ENCODE measurements at regions of chr3 and their contacts with region 1.

Region 1: GRCh38 chr3:15268033-15268631 is 62.1 kb downstream of the CAPN7 start:
- DNase-seq: peak; percentile 59
- ATAC-seq: peak; percentile 87
- H3K4me3 ChIP-seq: no peak overlapping the region
- H3K27ac ChIP-seq: no peak overlapping the region
- H3K4me1 ChIP-seq: no peaks in the 10 kb centered on the region
- H3K27me3 ChIP-seq: no peaks in the 10 kb centered on the region; a peak in 1 of 5 replicates
- CTCF ChIP-seq: peak; percentile 94
- EP300 ChIP-seq: no peak
- POLR2A ChIP-seq: no peak
- RAD21 ChIP-seq: peak; percentile 75

Region 2: DNA sequence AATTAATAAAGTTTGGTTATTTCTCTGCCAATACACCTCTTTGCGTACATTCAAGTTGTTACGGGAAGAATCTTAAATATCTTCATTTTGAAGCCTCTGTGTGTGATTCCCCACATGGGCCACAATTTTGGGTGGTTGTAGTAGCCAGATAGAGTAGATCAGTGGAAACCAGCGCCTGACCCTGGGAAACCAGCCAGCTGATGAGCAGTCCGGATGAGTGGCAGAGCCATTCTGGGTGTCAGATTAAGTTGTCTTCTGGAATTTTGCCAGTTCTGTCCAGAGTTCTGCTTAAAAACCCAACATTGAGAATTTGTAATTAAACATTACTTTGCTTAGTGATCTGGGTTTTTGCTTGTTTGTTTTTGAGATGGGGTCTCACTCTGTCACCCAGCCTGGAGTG is 252.7 kb before region 1 on chr3:
- CTCF ChIA-PET with region 1: no interaction called
- POLR2A ChIA-PET with region 1: no interaction called
- in situ Hi-C with region 1: no loop called
- intact Hi-C with region 1: no loop called
- DNase-seq: no peak
- ATAC-seq: no peak
- H3K4me3 ChIP-seq: no peak overlapping the region
- H3K27ac ChIP-seq: no peak overlapping the region
- H3K4me1 ChIP-seq: no peaks in the 10 kb centered on the region
- H3K27me3 ChIP-seq: no peaks in the 10 kb centered on the region
- CTCF ChIP-seq: no peak
- EP300 ChIP-seq: no peak
- POLR2A ChIP-seq: no peak
- RAD21 ChIP-seq: no peak

Region 3: GRCh38 chr3:15074493-15074892 is 193.6 kb before region 1 on chr3:
- CTCF ChIA-PET with region 1: no interaction called
- POLR2A ChIA-PET with region 1: no interaction called
- in situ Hi-C with region 1: no loop called
- intact Hi-C with region 1: no loop called
- DNase-seq: no peak
- ATAC-seq: no peak
- H3K4me3 ChIP-seq: no peak overlapping the region
- H3K27ac ChIP-seq: no peak overlapping the region
- H3K4me1 ChIP-seq: no peaks in the 10 kb centered on the region
- H3K27me3 ChIP-seq: no peaks in the 10 kb centered on the region
- CTCF ChIP-seq: no peak
- EP300 ChIP-seq: no peak
- POLR2A ChIP-seq: no peak
- RAD21 ChIP-seq: no peak

Region 4: DNA sequence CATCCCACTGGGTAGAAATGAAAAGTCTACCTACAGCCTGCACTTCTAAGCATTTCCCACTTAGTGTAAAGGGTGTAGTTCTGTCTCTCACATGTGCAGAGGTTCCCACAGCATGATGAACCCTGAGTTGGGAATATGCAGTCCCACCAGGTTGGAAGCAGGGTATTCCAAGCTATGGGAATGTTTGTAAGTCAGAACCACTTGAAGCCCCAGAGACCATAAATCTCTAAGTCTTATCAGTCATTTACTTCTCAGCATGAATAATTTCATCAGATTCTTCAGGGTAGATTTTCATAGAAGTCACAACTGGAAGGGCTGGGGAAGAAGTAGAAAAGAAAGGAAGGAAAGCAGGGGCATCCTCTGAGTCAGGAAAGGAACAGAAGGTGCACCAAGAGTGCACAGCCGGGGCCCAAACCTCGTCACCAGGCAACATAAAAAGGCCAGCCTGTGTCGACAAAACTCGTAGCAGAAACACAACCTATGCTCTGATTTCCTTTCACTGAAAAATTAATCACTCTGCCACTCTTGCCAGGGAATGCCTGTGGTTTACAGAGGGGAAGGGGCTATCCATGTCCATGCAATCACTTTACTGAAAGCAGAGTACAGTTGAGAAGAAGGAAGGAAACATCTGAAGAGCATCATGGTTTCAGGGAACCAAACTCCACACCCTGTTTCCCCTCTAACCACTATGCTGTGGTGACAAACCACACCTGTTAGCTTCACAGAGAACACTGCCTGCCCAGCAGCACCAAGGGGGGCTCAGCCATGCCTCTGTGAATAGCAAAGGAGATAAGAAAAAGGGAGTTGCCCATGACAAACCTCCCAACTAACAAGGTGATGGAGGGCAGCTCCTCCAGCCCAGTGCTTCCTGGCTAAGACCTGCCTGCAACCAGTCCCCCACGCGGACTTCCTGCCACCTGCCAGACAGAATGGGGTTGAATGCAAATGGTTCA is 23.7 kb after region 1 on chr3:
- CTCF ChIA-PET with region 1: no interaction called
- POLR2A ChIA-PET with region 1: no interaction called
- in situ Hi-C with region 1: no loop called
- intact Hi-C with region 1: no loop called
- DNase-seq: no peak
- ATAC-seq: no peak
- H3K4me3 ChIP-seq: no peak overlapping the region
- H3K27ac ChIP-seq: no peak overlapping the region
- H3K4me1 ChIP-seq: no peaks in the 10 kb centered on the region
- H3K27me3 ChIP-seq: no peaks in the 10 kb centered on the region
- CTCF ChIP-seq: no peak
- EP300 ChIP-seq: no peak
- POLR2A ChIP-seq: no peak
- RAD21 ChIP-seq: no peak

Region 5: DNA sequence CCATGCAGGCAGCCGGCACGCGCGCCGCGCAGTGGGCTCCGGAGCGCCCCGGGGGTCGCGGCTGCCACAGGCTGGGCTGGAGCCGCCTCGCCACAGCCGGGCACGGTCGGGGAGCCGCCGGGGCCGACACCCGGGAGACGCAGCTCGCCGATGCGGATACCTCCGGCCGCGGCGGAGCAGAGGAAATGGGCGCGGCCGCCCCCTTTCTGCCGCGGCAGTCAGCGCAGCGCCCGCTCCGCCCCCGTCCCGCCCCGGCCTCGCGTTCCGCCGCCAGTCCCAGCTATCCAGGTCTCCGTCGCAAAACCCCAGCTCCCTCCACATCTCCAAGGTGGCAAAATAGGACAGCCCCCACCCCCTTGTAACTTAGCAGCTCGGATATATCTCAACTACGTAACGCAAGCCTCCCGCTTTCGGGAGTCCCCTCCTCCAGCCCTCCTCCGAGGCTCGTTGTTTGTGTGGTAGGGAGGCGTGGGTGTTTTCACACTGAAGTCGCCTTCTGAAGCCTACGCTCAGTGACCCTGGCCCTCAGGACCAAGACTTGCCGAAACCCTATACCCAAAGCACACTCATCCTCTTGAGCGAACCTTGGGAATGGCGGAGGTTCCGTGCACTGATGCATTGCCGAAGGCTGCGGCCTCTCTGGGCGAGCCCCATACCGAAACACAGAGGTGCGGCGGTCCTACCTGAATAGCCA is 64.4 kb after region 1 on chr3 and contains the start of gene SH3BP5:
- CTCF ChIA-PET with region 1: no interaction called
- POLR2A ChIA-PET with region 1: no interaction called
- in situ Hi-C with region 1: no loop called
- intact Hi-C with region 1: loop called (anchors 5 kb)
- DNase-seq: no peak
- ATAC-seq: peak; percentile 98
- H3K4me3 ChIP-seq: peak within 1 kb of the TSS; percentile 56 to 81 (median 61)
- H3K27ac ChIP-seq: no peak within 1 kb of the TSS
- H3K4me1 ChIP-seq: peaks cover 10% of the 10 kb centered on the region
- H3K27me3 ChIP-seq: peaks cover 8 to 35% of the 10 kb centered on the region in 2 experiments; a peak in 4 of 5 replicates
- CTCF ChIP-seq: peak; percentile 62
- EP300 ChIP-seq: no peak
- POLR2A ChIP-seq: no peak
- RAD21 ChIP-seq: peak; percentile 73
- total RNA-seq, gene SH3BP5: 0.09 TPM in 1 of 2 replicates, not detected in the other

Region 6: GRCh38 chr3:15377961-15378791 is 110.0 kb after region 1 on chr3:
- CTCF ChIA-PET with region 1: interaction called, 16 read pairs
- POLR2A ChIA-PET with region 1: no interaction called
- in situ Hi-C with region 1: loop called (anchors 5 kb)
- intact Hi-C with region 1: loop called (anchors 1 kb)
- DNase-seq: peak; percentile 89
- ATAC-seq: peak; percentile 98
- H3K4me3 ChIP-seq: peak overlapping the region; percentile 42 to 59 (median 51); a peak in 5 of 6 replicates
- H3K27ac ChIP-seq: peak overlapping the region; percentile 25
- H3K4me1 ChIP-seq: peaks cover 5% of the 10 kb centered on the region; the same call in 1 of the 2 replicates
- H3K27me3 ChIP-seq: no peaks in the 10 kb centered on the region
- CTCF ChIP-seq: peak; percentile 94
- EP300 ChIP-seq: no peak; a peak in 1 of 4 replicates
- POLR2A ChIP-seq: no peak
- RAD21 ChIP-seq: peak; percentile 78

Region 7: GRCh38 chr3:15405448-15406050 is 137.4 kb after region 1 on chr3:
- CTCF ChIA-PET with region 1: interaction called, 3 read pairs
- POLR2A ChIA-PET with region 1: no interaction called
- in situ Hi-C with region 1: no loop called
- intact Hi-C with region 1: loop called (anchors 1 kb)
- DNase-seq: peak; percentile 40
- ATAC-seq: peak; percentile 69
- H3K4me3 ChIP-seq: no peak overlapping the region
- H3K27ac ChIP-seq: no peak overlapping the region
- H3K4me1 ChIP-seq: no peaks in the 10 kb centered on the region
- H3K27me3 ChIP-seq: no peaks in the 10 kb centered on the region
- CTCF ChIP-seq: peak; percentile 44; the same call in 1 of the 2 replicates
- EP300 ChIP-seq: no peak
- POLR2A ChIP-seq: no peak
- RAD21 ChIP-seq: no peak

Region 8: DNA sequence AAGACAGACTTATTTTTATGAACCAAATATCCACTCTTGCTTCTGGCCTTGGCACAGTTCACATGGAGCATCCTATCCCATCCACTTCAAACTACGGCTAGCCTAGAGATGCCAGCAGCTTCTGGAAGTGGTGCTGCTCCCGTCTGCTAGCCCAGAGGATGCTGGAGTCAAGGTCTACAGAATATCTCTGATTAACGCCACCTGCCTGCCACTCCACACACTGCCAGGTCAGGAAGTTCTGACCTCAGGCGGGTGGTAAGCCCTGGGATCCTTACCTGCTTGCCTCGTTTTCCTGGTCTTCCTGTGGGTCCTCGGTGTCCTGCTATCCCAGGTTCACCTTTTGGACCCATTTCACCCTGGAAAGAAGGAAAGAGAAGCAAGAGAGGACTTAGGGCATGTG is 202.1 kb after region 1 on chr3:
- CTCF ChIA-PET with region 1: no interaction called
- POLR2A ChIA-PET with region 1: no interaction called
- in situ Hi-C with region 1: no loop called
- intact Hi-C with region 1: loop called (anchors 1 kb)
- DNase-seq: peak; percentile 25
- ATAC-seq: peak; percentile 97
- H3K4me3 ChIP-seq: no peak overlapping the region
- H3K27ac ChIP-seq: no peak overlapping the region
- H3K4me1 ChIP-seq: no peaks in the 10 kb centered on the region
- H3K27me3 ChIP-seq: no peaks in the 10 kb centered on the region; a peak in 1 of 5 replicates
- CTCF ChIP-seq: peak; percentile 63
- EP300 ChIP-seq: no peak
- POLR2A ChIP-seq: no peak
- RAD21 ChIP-seq: no peak; the same call in 1 of the 2 replicates

Region 9: DNA sequence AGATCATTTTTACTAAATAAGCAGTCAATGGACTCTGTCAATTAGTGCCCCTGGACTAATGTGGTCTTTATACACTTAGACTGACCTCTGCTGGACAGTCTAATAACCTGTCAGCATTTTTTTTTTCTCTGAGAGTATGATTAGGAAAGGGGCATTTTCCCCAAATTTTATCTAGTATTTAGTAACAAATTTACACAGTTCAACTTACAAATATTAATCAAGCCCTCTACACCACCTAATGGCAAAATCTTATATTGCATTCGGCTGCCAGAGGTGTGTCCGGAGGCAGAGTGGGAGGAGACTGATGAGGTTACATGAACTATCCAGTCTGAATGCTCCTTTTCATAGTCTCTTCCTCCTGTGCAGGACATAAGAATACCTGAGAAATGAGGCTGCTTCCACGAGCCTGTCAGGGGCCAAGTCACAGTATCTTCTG is 289.4 kb after region 1 on chr3:
- CTCF ChIA-PET with region 1: interaction called, 5 read pairs
- POLR2A ChIA-PET with region 1: no interaction called
- in situ Hi-C with region 1: no loop called
- intact Hi-C with region 1: loop called (anchors 1 kb)
- DNase-seq: peak; percentile 75
- ATAC-seq: peak; percentile 86
- H3K4me3 ChIP-seq: no peak overlapping the region
- H3K27ac ChIP-seq: peak overlapping the region; percentile 32
- H3K4me1 ChIP-seq: peaks cover 27% of the 10 kb centered on the region
- H3K27me3 ChIP-seq: no peaks in the 10 kb centered on the region
- CTCF ChIP-seq: peak; percentile 67
- EP300 ChIP-seq: no peak
- POLR2A ChIP-seq: no peak
- RAD21 ChIP-seq: peak; percentile 37

Region 10: DNA sequence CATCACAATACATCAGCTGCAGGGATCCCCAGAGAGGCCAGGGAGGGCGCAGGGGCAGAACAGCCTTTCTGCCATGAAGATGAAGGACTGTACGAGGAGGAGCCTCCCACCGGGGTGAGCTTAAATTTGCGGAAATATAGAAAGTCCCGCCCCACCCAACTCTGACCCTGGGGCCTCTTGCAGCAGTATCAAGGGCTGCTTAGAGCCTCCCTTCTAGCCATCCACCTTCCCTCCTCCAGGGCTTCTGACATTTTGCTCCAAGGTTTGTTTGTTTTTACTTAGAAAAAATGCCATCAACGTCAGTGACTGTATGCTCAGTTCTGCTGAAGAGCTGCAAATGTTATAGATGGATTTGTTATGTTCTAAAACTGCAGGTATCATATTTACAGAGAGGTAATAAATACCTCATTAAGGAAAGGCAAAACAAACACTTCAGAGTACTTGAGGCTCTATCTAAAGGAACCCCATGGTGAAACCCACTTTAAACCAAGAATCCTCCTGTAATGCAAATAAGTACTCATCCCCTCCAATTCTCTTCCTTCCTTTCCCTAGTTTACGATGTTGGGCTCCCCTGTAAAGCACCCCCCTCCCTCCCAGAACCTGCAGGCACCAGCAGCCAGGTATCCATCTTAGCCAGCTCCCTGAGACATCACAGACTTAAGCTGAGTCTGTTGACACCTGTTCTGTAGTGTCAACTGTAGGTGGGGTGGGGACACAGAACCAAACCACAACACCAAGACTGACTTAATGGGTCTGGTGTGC is 1214.8 kb after region 1 on chr3:
- CTCF ChIA-PET with region 1: no interaction called
- POLR2A ChIA-PET with region 1: no interaction called
- in situ Hi-C with region 1: no loop called
- intact Hi-C with region 1: no loop called
- DNase-seq: no peak
- ATAC-seq: no peak
- H3K4me3 ChIP-seq: no peak overlapping the region
- H3K27ac ChIP-seq: no peak overlapping the region
- H3K4me1 ChIP-seq: no peaks in the 10 kb centered on the region
- H3K27me3 ChIP-seq: peaks cover 0 to 7% of the 10 kb centered on the region in 2 experiments; a peak in 4 of 5 replicates
- CTCF ChIP-seq: no peak
- EP300 ChIP-seq: no peak
- POLR2A ChIP-seq: no peak
- RAD21 ChIP-seq: no peak